ENCODE measurements at regions of chr7 and their contacts with region 1.

Region 1: DNA sequence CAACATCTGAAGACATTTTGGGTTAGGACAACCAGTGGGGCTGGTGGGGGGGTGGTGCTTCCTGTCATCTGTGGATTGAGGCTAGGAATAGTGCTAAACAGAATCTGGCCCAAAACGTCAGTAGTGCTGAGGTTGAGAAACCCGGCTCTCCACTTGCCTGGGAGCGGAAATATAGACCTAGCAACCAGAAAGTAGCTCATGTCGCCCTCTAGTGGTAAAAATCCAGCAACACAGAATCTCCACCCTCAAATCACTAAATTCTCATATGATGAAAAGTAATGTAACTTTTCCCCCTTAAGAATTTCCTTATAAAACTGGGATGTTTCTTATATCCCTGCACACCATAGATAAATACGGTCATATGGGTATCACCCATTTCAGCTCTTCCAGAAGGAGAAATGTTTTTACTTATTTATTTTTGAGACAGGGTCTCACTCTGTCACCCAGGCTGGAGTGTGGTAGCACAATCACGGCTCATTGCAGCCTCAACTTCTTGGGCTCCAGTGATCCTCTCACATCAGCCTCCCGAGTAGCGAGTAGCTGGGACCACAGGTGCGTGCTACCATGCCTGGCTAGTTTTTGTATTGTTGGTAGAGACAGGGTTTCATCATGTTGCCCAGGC is 34.4 kb downstream of the ZC3HAV1 start:
- DNase-seq: peak; percentile 58 to 80 (median 78)
- H3K4me3 ChIP-seq: no peak overlapping the region
- H3K4me3 Mint-ChIP-seq: peak overlapping the region; percentile 22 to 82 (median 58)
- H3K27ac ChIP-seq: no peak overlapping the region
- H3K27ac Mint-ChIP-seq: peak overlapping the region; percentile 66 to 91 (median 81)
- H3K4me1 ChIP-seq: peaks cover 58% of the 10 kb centered on the region
- H3K4me1 Mint-ChIP-seq: peaks cover 51 to 82% (median 75%) of the 10 kb centered on the region in 3 donors
- H3K27me3 ChIP-seq: no peaks in the 10 kb centered on the region
- H3K27me3 Mint-ChIP-seq: peaks cover 0 to 1% of the 10 kb centered on the region in 2 donors

Region 2: GRCh38 chr7:138886501-138886917 is 188.6 kb before region 1 on chr7:
- CTCF ChIA-PET with region 1: interaction called, 29 read pairs
- POLR2A ChIA-PET with region 1: interaction called, 3 read pairs
- DNase-seq: peak in 3 of 5 donors; percentile 24 to 72 (median 66)
- H3K4me3 ChIP-seq: no peak overlapping the region
- H3K4me3 Mint-ChIP-seq: peak overlapping the region in 3 of 7 donors; percentile 39 to 65 (median 52)
- H3K27ac ChIP-seq: no peak overlapping the region
- H3K27ac Mint-ChIP-seq: peak overlapping the region in 6 of 8 donors; percentile 39 to 81 (median 76)
- H3K4me1 ChIP-seq: peaks cover 4% of the 10 kb centered on the region
- H3K4me1 Mint-ChIP-seq: peaks cover 5 to 23% (median 16%) of the 10 kb centered on the region in 3 donors
- H3K27me3 ChIP-seq: no peaks in the 10 kb centered on the region
- H3K27me3 Mint-ChIP-seq: peaks cover 0 to 6% of the 10 kb centered on the region in 2 donors

Region 3: GRCh38 chr7:139023076-139023475 is 52.1 kb before region 1 on chr7:
- CTCF ChIA-PET with region 1: interaction called, 30 read pairs
- POLR2A ChIA-PET with region 1: no interaction called
- DNase-seq: no peak
- H3K4me3 ChIP-seq: no peak overlapping the region
- H3K4me3 Mint-ChIP-seq: no peak overlapping the region
- H3K27ac ChIP-seq: no peak overlapping the region
- H3K27ac Mint-ChIP-seq: no peak overlapping the region
- H3K4me1 ChIP-seq: no peaks in the 10 kb centered on the region
- H3K4me1 Mint-ChIP-seq: no peaks in the 10 kb centered on the region
- H3K27me3 ChIP-seq: no peaks in the 10 kb centered on the region
- H3K27me3 Mint-ChIP-seq: no peaks in the 10 kb centered on the region

Region 4: GRCh38 chr7:139058943-139059342 is 16.2 kb before region 1 on chr7:
- CTCF ChIA-PET with region 1: interaction called, 16 read pairs
- POLR2A ChIA-PET with region 1: interaction called, 3 read pairs
- DNase-seq: no peak
- H3K4me3 ChIP-seq: no peak overlapping the region
- H3K4me3 Mint-ChIP-seq: no peak overlapping the region
- H3K27ac ChIP-seq: no peak overlapping the region
- H3K27ac Mint-ChIP-seq: peak overlapping the region in 5 of 8 donors; percentile 4 to 89 (median 44)
- H3K4me1 ChIP-seq: peaks cover 16% of the 10 kb centered on the region
- H3K4me1 Mint-ChIP-seq: peaks cover 38 to 66% (median 47%) of the 10 kb centered on the region in 3 donors
- H3K27me3 ChIP-seq: no peaks in the 10 kb centered on the region
- H3K27me3 Mint-ChIP-seq: peaks cover 0 to 1% of the 10 kb centered on the region in 2 donors

Region 5: GRCh38 chr7:139095194-139095659 is 20.1 kb after region 1 on chr7:
- CTCF ChIA-PET with region 1: interaction called, 40 read pairs
- POLR2A ChIA-PET with region 1: interaction called, 12 read pairs
- DNase-seq: peak; percentile 65 to 95 (median 91)
- H3K4me3 ChIP-seq: peak overlapping the region; percentile 74
- H3K4me3 Mint-ChIP-seq: peak overlapping the region; percentile 77 to 92 (median 86)
- H3K27ac ChIP-seq: peak overlapping the region; percentile 40
- H3K27ac Mint-ChIP-seq: peak overlapping the region; percentile 74 to 99 (median 94)
- H3K4me1 ChIP-seq: peaks cover 82% of the 10 kb centered on the region
- H3K4me1 Mint-ChIP-seq: peaks cover 87 to 98% (median 97%) of the 10 kb centered on the region in 3 donors
- H3K27me3 ChIP-seq: no peaks in the 10 kb centered on the region
- H3K27me3 Mint-ChIP-seq: no peaks in the 10 kb centered on the region

Region 6: DNA sequence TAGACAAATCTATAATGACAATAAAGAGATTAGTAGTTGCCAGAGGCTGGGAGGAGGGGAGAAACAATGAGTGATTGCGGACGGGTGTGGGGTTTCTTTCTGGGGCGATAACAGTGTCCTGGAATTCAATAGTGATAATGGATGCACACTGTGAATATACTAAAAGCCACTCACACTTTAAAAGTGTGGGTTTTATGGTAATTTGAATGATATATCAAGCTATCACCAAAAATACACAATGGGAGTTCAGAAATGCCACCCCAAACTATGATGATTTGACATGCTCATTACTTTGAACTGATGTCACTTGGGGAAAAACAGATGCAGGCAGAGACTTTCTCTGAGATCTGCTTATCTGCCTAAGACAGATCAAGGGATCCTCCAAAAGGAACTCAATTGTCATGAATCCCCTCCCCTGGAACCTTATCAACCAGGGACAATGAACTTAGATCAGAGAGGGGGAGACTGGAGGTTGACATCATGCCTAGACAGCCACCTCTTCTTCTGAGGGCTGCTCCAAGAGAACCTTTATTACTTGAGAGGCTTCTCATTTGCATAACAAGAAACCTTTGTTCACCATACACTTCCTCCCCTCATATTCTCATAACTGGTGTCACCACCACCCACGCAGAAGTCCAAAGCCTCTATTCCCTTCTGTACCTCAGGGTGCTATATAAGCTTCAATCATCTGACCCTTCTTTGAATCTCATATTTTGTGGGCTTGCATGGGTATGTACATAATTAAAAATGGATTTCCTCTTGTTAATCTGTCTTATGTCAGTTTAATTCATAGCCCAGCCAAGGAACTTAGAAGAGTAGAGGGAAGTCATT is 49.2 kb after region 1 on chr7:
- CTCF ChIA-PET with region 1: interaction called, 12 read pairs
- POLR2A ChIA-PET with region 1: no interaction called
- DNase-seq: no peak
- H3K4me3 ChIP-seq: no peak overlapping the region
- H3K4me3 Mint-ChIP-seq: no peak overlapping the region
- H3K27ac ChIP-seq: peak overlapping the region; percentile 41
- H3K27ac Mint-ChIP-seq: no peak overlapping the region
- H3K4me1 ChIP-seq: peaks cover 13% of the 10 kb centered on the region
- H3K4me1 Mint-ChIP-seq: peaks cover 5 to 12% (median 9%) of the 10 kb centered on the region in 3 donors
- H3K27me3 ChIP-seq: no peaks in the 10 kb centered on the region
- H3K27me3 Mint-ChIP-seq: peaks cover 4% of the 10 kb centered on the region in 2 donors

Measured in CD8-positive, alpha-beta memory T cell (primary cell).